K562 (cell line): ENCODE measurements at regions of chr6 and their contacts with region 1.

Region 1: DNA sequence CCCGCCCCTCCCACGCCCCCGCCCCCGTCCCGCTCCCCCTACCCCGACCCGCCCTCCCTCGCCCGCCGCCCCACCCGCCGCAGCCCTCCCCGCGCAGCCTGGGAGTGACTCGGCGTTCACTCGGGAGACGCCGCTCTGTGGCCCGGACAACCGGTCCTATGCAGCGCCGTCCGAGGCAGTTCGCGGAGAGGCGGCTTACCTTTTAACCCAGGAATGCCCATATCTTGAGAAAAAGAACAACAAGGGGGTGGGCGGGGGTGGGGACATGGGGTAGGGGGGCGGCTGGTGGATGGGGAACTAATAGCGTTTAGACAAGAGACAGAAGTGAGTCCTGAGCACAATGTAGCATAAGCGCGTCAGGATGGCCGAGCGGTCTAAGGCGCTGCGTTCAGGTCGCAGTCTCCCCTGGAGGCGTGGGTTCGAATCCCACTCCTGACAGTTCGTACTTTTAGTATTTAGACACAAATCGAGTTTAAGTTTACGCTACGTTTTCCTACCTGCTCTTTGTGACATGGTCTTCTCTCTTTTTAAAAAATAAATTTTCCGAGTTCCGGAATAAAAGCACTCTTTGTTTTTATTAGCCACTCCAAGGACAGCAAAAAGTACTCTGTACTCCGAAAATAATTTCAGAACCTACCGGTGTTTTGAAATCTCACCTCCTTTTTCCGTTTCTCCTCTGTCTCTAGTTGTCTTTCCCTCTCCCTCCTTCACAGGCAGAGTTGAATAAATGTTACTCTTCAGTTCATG is 17.1 kb upstream of the HMGN4 start:
- DNase-seq: peak; percentile 94 to 98 (median 98)
- ATAC-seq: peak; percentile 78
- H3K4me3 ChIP-seq: peak overlapping the region; percentile 70
- H3K27ac ChIP-seq: peak overlapping the region; percentile 98
- H3K4me1 ChIP-seq: peaks cover 13 to 28% of the 10 kb centered on the region in 2 experiments; a peak in 4 of 5 replicates
- H3K27me3 ChIP-seq: no peaks in the 10 kb centered on the region
- CTCF ChIP-seq: peak in 1 of 3 experiments; percentile 8; a peak in 2 of 6 replicates
- EP300 ChIP-seq: peak; percentile 68
- POLR2A ChIP-seq: no peak
- RAD21 ChIP-seq: no peak

Region 2: DNA sequence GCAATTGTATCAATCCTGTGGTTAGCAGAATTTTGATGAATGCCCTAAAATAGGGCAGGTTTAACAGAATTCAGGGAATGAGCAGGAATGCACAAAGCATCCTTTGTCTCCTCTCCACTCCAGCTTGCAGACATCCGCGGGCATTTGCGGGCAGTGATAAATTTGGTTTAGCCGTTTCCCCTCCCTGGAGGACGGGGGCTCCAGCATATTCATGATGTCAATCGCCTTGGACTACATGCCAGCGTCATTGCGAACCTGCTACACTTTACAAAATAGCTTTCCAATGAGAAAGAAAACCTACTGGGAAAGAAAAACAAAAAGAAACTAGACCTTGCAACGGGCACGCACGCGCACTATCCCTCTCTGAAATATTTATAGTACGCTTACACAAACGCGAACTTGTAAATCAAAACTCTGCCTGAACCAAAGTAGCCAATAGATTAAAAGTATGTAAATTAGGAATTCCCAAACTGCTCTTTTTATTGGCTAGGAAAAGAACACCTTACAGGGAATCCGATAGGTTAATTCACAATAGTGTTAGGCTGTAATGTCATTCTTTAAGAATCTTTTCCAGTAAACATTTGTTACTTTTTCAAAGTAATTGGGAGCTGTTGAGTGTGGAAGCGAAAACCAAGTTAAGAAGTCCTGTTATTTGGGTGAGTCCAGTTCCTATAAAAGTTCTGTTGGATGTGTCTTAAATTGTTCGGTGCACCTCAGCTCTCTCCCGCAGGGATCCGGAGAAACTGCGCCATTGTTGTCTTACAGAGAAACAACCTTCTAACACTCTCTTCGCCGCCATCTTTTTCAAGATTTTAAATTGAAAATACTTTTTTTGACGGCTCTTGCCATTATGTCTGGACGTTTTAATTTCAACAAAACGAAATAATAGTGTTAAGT is 297.1 kb before region 1 on chr6:
- CTCF ChIA-PET with region 1: no interaction called
- POLR2A ChIA-PET with region 1: no interaction called
- in situ Hi-C with region 1: no loop called
- intact Hi-C with region 1: no loop called
- DNase-seq: no peak
- ATAC-seq: no peak
- H3K4me3 ChIP-seq: no peak overlapping the region
- H3K27ac ChIP-seq: no peak overlapping the region
- H3K4me1 ChIP-seq: peaks cover 1 to 19% of the 10 kb centered on the region in 2 experiments
- H3K27me3 ChIP-seq: no peaks in the 10 kb centered on the region
- CTCF ChIP-seq: no peak
- EP300 ChIP-seq: no peak
- POLR2A ChIP-seq: no peak
- RAD21 ChIP-seq: no peak

Region 3: DNA sequence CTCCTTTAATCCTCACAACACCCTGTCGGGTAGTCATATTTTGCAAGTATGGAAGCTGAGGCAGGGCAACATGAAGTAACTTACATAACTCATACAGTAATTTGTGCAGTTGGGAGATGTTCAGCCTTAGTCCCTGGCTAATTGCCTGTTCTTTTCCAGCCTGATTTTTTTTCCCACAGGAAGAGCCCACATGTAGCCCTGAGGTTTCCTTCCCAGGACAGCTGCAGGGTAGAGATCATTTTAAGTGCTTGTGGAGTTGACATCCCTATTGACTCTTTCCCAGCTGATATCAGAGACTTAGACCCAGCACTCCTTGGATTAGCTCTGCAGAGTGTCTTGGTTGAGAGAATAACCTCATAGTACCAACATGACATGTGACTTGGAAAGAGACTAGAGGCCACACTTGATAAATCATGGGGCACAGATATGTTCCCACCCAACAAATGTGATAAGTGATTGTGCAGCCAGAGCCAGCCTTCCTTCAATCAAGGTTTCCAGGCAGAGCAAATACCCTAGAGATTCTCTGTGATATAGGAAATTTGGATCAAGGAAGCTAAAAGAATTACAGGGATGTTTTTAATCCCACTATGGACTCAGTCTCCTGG is 68.3 kb before region 1 on chr6:
- CTCF ChIA-PET with region 1: no interaction called
- POLR2A ChIA-PET with region 1: no interaction called
- in situ Hi-C with region 1: no loop called
- intact Hi-C with region 1: no loop called
- DNase-seq: no peak
- ATAC-seq: no peak
- H3K4me3 ChIP-seq: no peak overlapping the region
- H3K27ac ChIP-seq: no peak overlapping the region
- H3K4me1 ChIP-seq: peaks cover 0 to 10% of the 10 kb centered on the region in 2 experiments; a peak in 3 of 5 replicates
- H3K27me3 ChIP-seq: no peaks in the 10 kb centered on the region
- CTCF ChIP-seq: no peak
- EP300 ChIP-seq: no peak
- POLR2A ChIP-seq: no peak
- RAD21 ChIP-seq: no peak

Region 4: GRCh38 chr6:26464416-26465131 is 56.5 kb before region 1 on chr6:
- CTCF ChIA-PET with region 1: no interaction called
- POLR2A ChIA-PET with region 1: no interaction called
- in situ Hi-C with region 1: no loop called
- intact Hi-C with region 1: no loop called
- DNase-seq: no peak
- ATAC-seq: no peak
- H3K4me3 ChIP-seq: no peak overlapping the region
- H3K27ac ChIP-seq: no peak overlapping the region
- H3K4me1 ChIP-seq: no peaks in the 10 kb centered on the region; a peak in 1 of 5 replicates
- H3K27me3 ChIP-seq: no peaks in the 10 kb centered on the region
- CTCF ChIP-seq: no peak
- EP300 ChIP-seq: no peak
- POLR2A ChIP-seq: no peak
- RAD21 ChIP-seq: no peak

Region 5: GRCh38 chr6:26501482-26501986 is 19.5 kb before region 1 on chr6:
- CTCF ChIA-PET with region 1: no interaction called
- POLR2A ChIA-PET with region 1: interaction called, 14 read pairs
- in situ Hi-C with region 1: no loop called
- intact Hi-C with region 1: no loop called
- DNase-seq: no peak
- ATAC-seq: no peak
- H3K4me3 ChIP-seq: no peak overlapping the region
- H3K27ac ChIP-seq: no peak overlapping the region
- H3K4me1 ChIP-seq: peaks cover 10 to 19% of the 10 kb centered on the region in 2 experiments
- H3K27me3 ChIP-seq: no peaks in the 10 kb centered on the region
- CTCF ChIP-seq: no peak
- EP300 ChIP-seq: no peak
- POLR2A ChIP-seq: no peak
- RAD21 ChIP-seq: no peak

Region 6: GRCh38 chr6:26532699-26533531 is 11.9 kb after region 1 on chr6:
- CTCF ChIA-PET with region 1: no interaction called
- POLR2A ChIA-PET with region 1: interaction called, 21 read pairs
- in situ Hi-C with region 1: no loop called
- intact Hi-C with region 1: loop called (anchors 1 kb)
- DNase-seq: peak; percentile 74 to 97 (median 80)
- ATAC-seq: peak; percentile 72
- H3K4me3 ChIP-seq: peak overlapping the region; percentile 74
- H3K27ac ChIP-seq: peak overlapping the region; percentile 77
- H3K4me1 ChIP-seq: peaks cover 9 to 19% of the 10 kb centered on the region in 2 experiments
- H3K27me3 ChIP-seq: no peaks in the 10 kb centered on the region
- CTCF ChIP-seq: peak in 1 of 3 experiments; percentile 9; a peak in 1 of 6 replicates
- EP300 ChIP-seq: peak; percentile 82
- POLR2A ChIP-seq: no peak
- RAD21 ChIP-seq: peak; percentile 12 to 15; a peak in 1 of 4 replicates

Region 7: GRCh38 chr6:26576929-26577719 is 56.1 kb after region 1 on chr6:
- CTCF ChIA-PET with region 1: no interaction called
- POLR2A ChIA-PET with region 1: no interaction called
- in situ Hi-C with region 1: no loop called
- intact Hi-C with region 1: no loop called
- DNase-seq: peak; percentile 60 to 96 (median 68)
- ATAC-seq: peak; percentile 77
- H3K4me3 ChIP-seq: peak overlapping the region; percentile 34
- H3K27ac ChIP-seq: peak overlapping the region; percentile 63
- H3K4me1 ChIP-seq: peaks cover 9 to 23% of the 10 kb centered on the region in 2 experiments; a peak in 4 of 5 replicates
- H3K27me3 ChIP-seq: no peaks in the 10 kb centered on the region
- CTCF ChIP-seq: no peak
- EP300 ChIP-seq: peak; percentile 52; the same call in 1 of the 2 replicates
- POLR2A ChIP-seq: no peak
- RAD21 ChIP-seq: 0 out of 4 replicates have a peak, but pooled peaks of 1 of the 2 experiments have one; percentile 10